ENCODE measurements at regions of chr3 and their contacts with region 1.

Region 1: GRCh38 chr3:195238586-195239118 is 32.3 kb downstream of the XXYLT1 start:
- DNase-seq: no peak

Region 2: GRCh38 chr3:195001961-195002861 is 236.4 kb before region 1 on chr3:
- intact Hi-C with region 1: loop called (anchors 5 kb)
- DNase-seq: peak; percentile 81

Region 3: GRCh38 chr3:195154793-195155535 is 83.7 kb before region 1 on chr3:
- intact Hi-C with region 1: loop called (anchors 5 kb)
- DNase-seq: peak; percentile 92

Region 4: DNA sequence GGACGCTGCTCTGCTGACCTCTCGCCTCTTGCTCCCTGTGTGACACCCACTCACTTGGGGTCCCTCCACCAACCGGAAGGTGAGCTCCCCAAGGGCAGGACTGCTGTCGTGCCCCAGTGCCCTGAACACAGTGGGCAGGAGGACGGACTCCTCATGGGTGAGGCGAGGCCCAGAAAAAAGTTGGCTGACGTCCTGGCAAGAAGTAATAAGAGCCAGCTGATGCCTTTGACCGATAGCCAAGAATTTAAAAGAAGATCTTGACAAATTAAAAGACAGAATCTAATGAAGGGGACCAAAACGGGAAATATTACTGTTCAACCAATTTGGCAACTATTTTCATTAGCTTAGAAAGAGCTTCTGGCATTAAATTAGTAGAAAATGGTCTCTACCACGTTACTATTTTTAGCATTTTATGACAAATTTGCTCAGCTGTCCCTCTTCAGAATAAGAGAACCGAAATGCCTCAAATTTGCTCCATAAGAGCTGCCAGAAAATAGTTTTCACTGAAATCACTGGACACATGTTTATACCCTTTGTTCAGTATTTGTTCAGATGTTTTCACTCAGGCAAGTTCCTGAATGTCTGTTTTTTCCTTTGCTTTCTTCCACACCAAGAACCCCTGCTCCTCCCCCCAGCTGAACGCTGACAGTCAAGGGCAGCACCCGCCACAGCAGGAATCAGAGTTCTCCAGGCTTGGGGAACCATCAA is 28.2 kb before region 1 on chr3:
- intact Hi-C with region 1: loop called (anchors 1 kb)
- DNase-seq: no peak